Right lobe of liver (tissue), 6 donors: ENCODE measurements at regions of chr2 and their contacts with region 1.

Region 1: DNA sequence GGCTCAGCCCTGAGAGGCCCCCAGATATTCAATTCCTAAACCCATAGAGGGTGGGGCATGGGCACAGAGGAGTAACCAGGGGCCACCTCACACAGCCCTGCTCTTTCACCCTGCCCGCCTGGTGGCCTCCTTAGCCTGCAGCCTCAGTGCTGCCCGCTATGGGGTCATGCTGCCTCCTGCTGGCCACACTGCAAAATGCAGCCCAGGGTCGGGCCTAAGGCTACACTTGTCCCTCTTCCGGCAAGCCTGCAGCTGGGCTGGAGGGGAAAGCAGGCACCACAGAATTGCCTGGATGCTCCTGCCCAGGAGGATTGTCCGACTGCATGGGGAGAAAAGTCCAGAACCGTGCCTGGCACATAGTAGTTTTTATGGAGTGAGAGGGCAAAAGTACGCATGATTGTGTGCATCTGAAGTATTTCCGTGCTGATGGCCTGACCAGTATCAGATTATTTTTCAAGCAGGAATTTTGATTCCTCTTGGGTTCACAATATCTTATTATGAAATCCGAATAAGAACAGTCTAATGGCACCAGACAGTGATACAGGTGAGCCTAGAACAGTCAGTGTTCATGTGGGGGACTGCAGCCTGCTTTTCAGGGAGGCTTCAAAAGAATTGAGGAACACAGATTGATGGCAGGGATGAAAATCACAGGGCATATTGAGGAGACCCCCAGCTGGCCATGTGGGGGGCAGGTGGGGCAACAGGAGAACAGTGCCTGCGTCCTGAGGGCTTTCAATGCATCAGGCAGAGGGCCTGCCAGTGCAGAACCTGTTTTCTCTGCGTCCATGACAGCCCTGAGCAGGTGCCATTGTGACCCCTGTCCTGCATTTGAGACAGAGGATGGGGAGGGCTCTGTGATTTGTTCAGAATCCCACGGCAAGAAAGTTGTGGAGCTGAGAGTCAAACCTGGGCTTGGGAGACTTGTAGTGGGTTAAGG is 51.2 kb upstream of the ALPP start:
- DNase-seq: peak in 2 of 3 donors; percentile 66 to 69
- ATAC-seq: peak; percentile 49 to 75 (median 66)
- H3K4me3 ChIP-seq: no peak overlapping the region
- H3K27ac ChIP-seq: no peak overlapping the region
- H3K4me1 ChIP-seq: no peaks in the 10 kb centered on the region
- H3K27me3 ChIP-seq: no peaks in the 10 kb centered on the region
- CTCF ChIP-seq: peak; percentile 64 to 80 (median 80)
- POLR2A ChIP-seq: no peak

Region 2: DNA sequence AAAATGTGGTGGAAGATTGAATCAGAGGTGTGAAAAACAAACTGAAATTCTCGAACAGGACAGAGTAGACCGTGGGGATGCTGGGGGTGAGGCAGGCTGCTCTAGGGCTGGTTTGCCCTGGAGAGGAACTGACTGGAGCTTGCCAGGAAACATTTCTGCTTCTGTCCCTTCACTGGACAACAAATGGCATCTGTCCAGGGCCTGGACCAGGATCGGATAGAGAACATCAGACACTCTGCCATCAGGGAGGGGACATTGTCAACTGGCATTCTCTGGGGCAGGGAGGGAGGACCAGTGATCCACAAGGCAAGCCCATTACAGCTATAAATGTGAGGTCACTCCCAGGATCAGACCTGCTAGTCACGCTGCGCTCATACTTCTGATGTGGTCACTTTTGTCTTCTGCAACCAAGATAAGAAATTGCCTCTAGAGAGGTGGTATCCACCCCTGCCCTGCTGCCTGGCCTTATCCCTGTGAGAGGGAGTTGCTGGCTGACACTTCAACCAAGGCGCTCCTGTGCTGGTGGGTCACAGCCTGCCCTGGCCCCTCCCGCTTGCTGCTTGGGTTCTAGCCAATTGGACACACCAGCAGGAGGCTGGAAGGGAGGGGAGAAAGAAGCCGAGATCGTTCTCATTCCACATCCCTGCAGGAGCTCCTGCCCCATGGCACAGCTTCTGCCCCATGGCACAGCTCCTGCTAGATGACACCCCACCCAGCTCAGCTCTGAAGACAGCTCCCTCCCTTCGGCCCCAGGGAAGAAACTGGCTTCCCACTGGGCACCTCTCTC is 409.9 kb before region 1 on chr2:
- intact Hi-C with region 1: loop called (anchors 5 to 10 kb)
- DNase-seq: peak in 1 of 3 donors; percentile 41
- ATAC-seq: peak in 1 of 4 donors; percentile 23
- H3K4me3 ChIP-seq: no peak overlapping the region
- H3K27ac ChIP-seq: no peak overlapping the region
- H3K4me1 ChIP-seq: no peaks in the 10 kb centered on the region
- H3K27me3 ChIP-seq: no peaks in the 10 kb centered on the region
- CTCF ChIP-seq: no peak
- POLR2A ChIP-seq: no peak

Region 3: DNA sequence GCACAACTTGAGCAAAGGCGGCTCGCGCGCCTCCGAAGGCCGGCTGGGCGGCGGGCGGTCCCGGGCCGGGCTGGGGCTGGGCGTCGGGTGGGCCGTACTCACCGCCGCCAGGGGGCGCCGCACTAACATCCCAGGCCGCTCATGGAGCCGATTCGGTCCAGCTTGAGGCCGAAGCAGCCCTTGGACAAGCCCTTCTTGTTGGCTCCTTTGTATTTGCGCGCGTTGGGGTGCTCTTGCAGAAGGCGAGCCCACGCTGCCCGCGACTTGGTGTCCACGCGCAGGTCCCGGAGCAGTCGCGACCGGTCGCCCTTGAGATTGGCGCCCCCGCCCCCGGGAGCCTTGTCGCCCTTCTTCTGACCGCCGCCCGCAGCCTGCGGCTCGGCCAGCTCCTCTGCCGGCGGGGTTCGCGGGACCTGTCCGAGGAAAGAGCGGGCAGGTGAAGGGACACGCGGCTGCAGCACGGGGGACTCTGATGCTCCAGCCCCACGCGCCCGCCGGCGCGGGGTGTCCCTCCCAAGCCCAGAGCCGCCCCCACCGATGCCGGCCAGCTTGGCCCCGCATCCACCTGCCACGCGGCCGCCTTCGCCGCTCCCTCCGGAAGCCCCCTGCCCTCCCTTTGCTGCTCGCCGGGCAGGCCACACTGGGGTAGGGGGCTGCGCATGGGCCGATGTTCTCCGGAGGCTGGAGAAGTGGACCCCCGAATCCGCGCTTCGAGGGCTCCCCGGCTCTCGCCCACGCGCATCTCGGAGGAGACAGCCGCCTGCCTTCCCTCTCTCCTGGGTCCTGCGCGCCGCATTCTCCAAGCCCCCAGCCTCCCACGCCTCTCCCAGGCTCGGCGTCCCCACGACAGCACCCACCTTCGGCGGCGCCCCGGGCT is 401.8 kb before region 1 on chr2:
- intact Hi-C with region 1: loop called in 1 of 2 experiments (anchors 10 kb)
- DNase-seq: peak; percentile 85 to 86 (median 85)
- ATAC-seq: peak; percentile 92 to 95 (median 94)
- H3K4me3 ChIP-seq: peak overlapping the region; percentile 25 to 48 (median 26)
- H3K27ac ChIP-seq: no peak overlapping the region
- H3K4me1 ChIP-seq: peaks cover 0 to 20% (median 10%) of the 10 kb centered on the region in 4 donors
- H3K27me3 ChIP-seq: peaks cover 3 to 6% of the 10 kb centered on the region in 2 donors
- CTCF ChIP-seq: peak; percentile 86 to 97 (median 92)
- POLR2A ChIP-seq: no peak

Region 4: DNA sequence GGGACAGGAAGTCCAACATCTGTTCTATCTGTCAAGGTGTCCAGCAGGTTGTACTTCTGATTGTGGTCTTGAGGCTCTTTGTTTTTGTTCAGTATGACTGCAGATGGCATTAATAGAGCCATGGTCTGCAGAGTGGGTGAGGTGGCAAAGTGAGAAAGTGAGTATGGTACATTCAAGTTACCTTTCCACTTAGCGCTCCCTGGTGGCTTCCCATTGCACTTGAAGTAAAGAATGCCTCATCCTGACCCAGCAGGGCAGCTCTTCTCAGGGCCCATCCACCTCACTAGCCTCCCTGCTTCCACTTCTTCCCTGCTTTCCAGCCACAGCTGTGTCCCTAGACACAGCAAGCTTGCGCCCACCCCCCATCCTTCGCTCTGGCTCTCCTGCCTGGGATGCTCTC is 96.8 kb before region 1 on chr2:
- intact Hi-C with region 1: no loop called
- DNase-seq: no peak
- ATAC-seq: peak in 2 of 4 donors; percentile 11 to 40
- H3K4me3 ChIP-seq: no peak overlapping the region
- H3K27ac ChIP-seq: no peak overlapping the region
- H3K4me1 ChIP-seq: peaks cover 0 to 4% (median 0%) of the 10 kb centered on the region in 4 donors
- H3K27me3 ChIP-seq: no peaks in the 10 kb centered on the region
- CTCF ChIP-seq: peak in 1 of 4 donors; percentile 28
- POLR2A ChIP-seq: no peak

Region 5: DNA sequence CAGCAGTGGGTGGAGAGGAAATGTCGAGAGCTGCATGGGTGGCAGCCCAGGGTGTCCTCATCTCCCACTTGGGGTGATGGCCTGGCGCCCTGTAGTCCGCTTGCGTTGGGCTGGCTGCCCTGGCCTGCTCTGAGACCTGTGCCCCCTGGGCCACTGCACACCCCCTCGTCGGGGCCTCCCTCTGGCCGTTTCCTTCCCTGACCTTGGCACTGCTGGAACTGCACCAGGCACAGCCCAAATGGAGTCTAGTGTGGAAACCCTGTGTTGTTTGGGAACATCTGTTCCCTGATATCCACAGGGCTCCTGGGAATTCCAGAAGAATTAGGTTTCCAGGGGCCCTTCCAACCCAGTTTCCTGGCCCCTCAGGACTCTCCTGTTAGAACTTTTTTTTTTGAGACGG is 319.9 kb after region 1 on chr2:
- intact Hi-C with region 1: no loop called
- DNase-seq: peak; percentile 38 to 84 (median 80)
- ATAC-seq: peak; percentile 45 to 82 (median 80)
- H3K4me3 ChIP-seq: no peak overlapping the region
- H3K27ac ChIP-seq: peak overlapping the region in 2 of 3 donors; percentile 43 to 49
- H3K4me1 ChIP-seq: peaks cover 0 to 18% (median 0%) of the 10 kb centered on the region in 4 donors
- H3K27me3 ChIP-seq: no peaks in the 10 kb centered on the region
- CTCF ChIP-seq: no peak
- POLR2A ChIP-seq: no peak